Mucosa of descending colon (tissue), 3 donors: ENCODE measurements at regions of chr5 and their contacts with region 1.

Region 1: DNA sequence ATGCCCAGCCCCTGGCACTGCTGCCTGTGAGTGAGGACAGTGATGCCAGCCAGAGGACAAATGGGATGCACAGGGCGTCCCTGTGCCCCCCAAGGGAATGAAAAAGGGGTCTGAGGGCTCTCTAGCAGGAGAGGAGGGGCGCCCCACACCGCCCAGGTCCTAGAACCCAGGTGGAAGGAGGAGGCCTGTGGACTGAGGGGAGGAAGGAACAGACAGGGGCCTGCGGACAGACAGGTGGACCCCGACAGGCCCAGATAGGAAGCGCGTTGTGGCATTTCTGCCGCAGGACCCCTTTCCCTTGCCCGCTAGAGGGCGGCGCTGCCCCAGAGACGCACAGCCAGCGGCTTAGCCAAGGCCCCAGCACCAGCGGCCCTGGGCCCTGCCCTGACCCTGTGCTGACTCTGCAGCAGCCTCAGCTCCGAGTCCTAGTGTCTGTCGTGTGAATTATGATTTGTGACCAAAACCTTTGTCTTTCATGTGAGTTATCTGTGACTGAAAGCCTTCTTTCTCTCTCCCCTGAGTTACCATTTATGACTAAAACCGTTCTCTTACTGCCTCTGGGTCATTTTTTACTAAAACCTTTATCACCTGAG is 30.7 kb downstream of the TRIP13 start:
- DNase-seq: peak; percentile 77 to 88 (median 87)
- ATAC-seq: peak; percentile 93
- H3K4me3 ChIP-seq: no peak overlapping the region
- H3K4me1 ChIP-seq: peaks cover 10% of the 10 kb centered on the region
- CTCF ChIP-seq: peak; percentile 70

Region 2: GRCh38 chr5:683551-684481 is 239.6 kb before region 1 on chr5:
- intact Hi-C with region 1: no loop called
- DNase-seq: peak in 1 of 3 donors; percentile 37
- ATAC-seq: no peak
- H3K4me3 ChIP-seq: no peak overlapping the region
- H3K4me1 ChIP-seq: no peaks in the 10 kb centered on the region
- CTCF ChIP-seq: no peak

Region 3: DNA sequence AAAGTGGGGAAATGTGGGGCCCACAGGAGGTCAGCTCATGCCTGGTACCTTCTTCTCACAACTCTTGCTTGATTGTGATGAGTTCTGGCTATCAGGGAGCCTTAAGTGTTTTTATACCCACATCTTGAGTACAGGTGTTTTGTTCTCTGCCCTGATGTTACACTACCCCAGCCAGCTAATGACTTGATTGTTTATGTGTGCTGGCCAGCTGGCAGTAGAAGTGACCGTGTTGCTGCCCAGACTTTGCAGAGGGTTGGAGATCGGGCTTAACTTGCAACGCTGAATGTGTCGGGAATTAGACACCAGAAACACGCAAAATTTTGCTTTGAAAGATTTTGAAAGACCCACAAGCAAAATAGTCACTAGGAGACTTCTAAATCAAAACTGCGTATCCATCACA is 121.9 kb before region 1 on chr5:
- intact Hi-C with region 1: no loop called
- DNase-seq: no peak
- ATAC-seq: no peak
- H3K4me3 ChIP-seq: no peak overlapping the region
- H3K4me1 ChIP-seq: no peaks in the 10 kb centered on the region
- CTCF ChIP-seq: no peak

Region 4: GRCh38 chr5:1004461-1005248 is 81.3 kb after region 1 on chr5:
- intact Hi-C with region 1: loop called in 1 of 2 experiments (anchors 10 kb)
- DNase-seq: peak; percentile 70 to 77 (median 71)
- ATAC-seq: peak; percentile 76
- H3K4me3 ChIP-seq: no peak overlapping the region
- H3K4me1 ChIP-seq: peaks cover 23% of the 10 kb centered on the region
- CTCF ChIP-seq: no peak

Region 5: GRCh38 chr5:1140171-1140817 is 216.9 kb after region 1 on chr5:
- intact Hi-C with region 1: loop called in 1 of 2 experiments (anchors 5 kb)
- DNase-seq: peak; percentile 85 to 93 (median 92)
- ATAC-seq: peak; percentile 91
- H3K4me3 ChIP-seq: no peak overlapping the region
- H3K4me1 ChIP-seq: peaks cover 11% of the 10 kb centered on the region
- CTCF ChIP-seq: peak; percentile 71

Region 6: DNA sequence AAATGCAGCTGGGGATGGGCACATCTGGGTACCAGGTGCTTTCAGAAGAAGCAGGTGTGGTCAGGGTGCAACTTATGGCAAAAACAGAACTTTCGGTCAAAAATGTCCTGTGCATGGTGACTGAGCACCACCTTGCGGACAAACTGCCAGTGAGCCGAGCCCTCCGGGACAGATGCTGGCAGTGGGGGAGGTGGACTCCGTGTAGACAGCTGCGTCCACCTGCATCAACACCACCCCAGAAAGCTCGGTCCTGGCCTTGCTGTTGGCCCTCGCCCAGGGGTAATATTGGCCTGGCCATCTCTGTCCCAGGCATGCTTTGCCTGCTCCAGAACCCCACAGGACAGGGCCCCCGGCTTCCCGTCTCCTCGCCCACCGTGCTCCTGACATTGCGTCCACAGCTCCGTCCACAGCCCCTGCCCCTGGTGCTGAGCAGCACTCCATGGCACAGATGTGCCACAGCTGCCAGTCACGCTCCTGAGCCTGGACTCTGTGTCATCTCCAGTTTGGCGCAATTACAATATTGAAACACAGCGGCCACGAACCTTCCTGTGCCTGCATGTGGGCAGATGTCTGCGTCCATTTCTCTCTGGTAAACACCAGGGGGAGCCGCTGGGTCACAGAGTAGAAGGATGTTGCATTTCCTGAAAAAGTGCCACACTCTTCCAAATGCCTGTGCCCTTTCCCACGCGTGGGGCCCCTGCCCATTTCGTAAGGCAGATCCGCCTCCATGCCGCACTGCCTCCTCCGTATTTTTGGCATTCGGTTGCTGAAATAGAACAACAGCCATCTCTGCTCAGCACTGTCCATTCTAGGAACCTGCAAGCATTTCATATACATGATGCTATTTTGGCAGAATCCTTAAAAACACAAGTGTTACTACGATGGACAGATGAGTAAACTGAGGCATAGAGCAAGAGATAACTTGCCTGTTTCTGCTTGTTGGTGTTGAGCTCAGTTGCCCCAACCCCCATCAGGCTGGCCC is 244.6 kb after region 1 on chr5:
- intact Hi-C with region 1: loop called in 1 of 2 experiments (anchors 10 kb)
- DNase-seq: peak; percentile 60 to 78 (median 70)
- ATAC-seq: peak; percentile 87
- H3K4me3 ChIP-seq: no peak overlapping the region
- H3K4me1 ChIP-seq: peaks cover 7% of the 10 kb centered on the region
- CTCF ChIP-seq: peak; percentile 65